Endothelial cell of umbilical vein (primary cell): ENCODE measurements at regions of chr14 and their contacts with region 1.

Region 1: GRCh38 chr14:22386924-22387775 is 201.9 kb downstream of the DAD1 start:
- DNase-seq: peak; percentile 77
- H3K4me3 ChIP-seq: no peak overlapping the region
- H3K27ac ChIP-seq: no peak overlapping the region
- H3K4me1 ChIP-seq: peaks cover 6% of the 10 kb centered on the region
- H3K27me3 ChIP-seq: peaks cover 6 to 15% of the 10 kb centered on the region in 2 experiments
- CTCF ChIP-seq: peak; percentile 68 to 70
- POLR2A ChIP-seq: no peak

Region 2: GRCh38 chr14:22418631-22419030 is 31.5 kb after region 1 on chr14:
- CTCF ChIA-PET with region 1: no interaction called
- POLR2A ChIA-PET with region 1: no interaction called
- dilution Hi-C with region 1: no loop called
- intact Hi-C with region 1: no loop called
- DNase-seq: no peak
- H3K4me3 ChIP-seq: no peak overlapping the region
- H3K27ac ChIP-seq: no peak overlapping the region
- H3K4me1 ChIP-seq: no peaks in the 10 kb centered on the region
- H3K27me3 ChIP-seq: peaks cover 8 to 23% of the 10 kb centered on the region in 2 experiments
- CTCF ChIP-seq: no peak
- POLR2A ChIP-seq: no peak

Region 3: DNA sequence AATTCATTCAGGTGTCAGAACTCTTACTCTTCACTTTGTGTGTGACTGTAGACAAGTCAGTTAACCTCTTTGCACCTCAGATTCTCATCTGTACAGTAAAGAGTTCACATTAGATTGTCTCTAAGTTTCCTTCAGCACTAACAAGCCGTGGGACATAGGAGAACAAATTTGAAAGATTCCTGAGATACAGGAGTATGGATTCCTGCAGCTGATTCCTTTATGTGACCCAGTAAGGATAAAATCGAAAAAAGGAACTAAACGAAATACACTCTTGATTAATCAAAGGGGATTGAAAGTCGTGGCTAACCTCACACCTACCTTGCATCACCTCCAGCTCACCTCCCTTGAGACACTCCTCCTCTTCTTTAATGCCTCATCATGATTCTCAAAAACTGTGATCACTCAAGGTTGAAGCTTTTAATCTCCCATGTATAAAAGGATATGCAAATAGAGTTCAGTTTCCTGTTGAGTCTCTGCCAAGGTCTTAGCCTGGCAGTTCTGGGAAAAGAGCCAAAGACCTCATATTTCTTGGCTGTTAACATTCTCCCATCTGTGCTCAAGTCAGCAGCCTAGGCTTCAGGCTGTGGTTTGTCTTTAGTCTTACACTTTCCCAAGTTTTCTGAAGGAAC is 45.3 kb after region 1 on chr14:
- CTCF ChIA-PET with region 1: interaction called, 5 read pairs
- POLR2A ChIA-PET with region 1: no interaction called
- dilution Hi-C with region 1: no loop called
- intact Hi-C with region 1: loop called (anchors 1 kb)
- DNase-seq: peak; percentile 97
- H3K4me3 ChIP-seq: no peak overlapping the region
- H3K27ac ChIP-seq: no peak overlapping the region
- H3K4me1 ChIP-seq: peaks cover 29% of the 10 kb centered on the region
- H3K27me3 ChIP-seq: peaks cover 4 to 6% of the 10 kb centered on the region in 2 experiments
- CTCF ChIP-seq: no peak
- POLR2A ChIP-seq: no peak

Region 4: DNA sequence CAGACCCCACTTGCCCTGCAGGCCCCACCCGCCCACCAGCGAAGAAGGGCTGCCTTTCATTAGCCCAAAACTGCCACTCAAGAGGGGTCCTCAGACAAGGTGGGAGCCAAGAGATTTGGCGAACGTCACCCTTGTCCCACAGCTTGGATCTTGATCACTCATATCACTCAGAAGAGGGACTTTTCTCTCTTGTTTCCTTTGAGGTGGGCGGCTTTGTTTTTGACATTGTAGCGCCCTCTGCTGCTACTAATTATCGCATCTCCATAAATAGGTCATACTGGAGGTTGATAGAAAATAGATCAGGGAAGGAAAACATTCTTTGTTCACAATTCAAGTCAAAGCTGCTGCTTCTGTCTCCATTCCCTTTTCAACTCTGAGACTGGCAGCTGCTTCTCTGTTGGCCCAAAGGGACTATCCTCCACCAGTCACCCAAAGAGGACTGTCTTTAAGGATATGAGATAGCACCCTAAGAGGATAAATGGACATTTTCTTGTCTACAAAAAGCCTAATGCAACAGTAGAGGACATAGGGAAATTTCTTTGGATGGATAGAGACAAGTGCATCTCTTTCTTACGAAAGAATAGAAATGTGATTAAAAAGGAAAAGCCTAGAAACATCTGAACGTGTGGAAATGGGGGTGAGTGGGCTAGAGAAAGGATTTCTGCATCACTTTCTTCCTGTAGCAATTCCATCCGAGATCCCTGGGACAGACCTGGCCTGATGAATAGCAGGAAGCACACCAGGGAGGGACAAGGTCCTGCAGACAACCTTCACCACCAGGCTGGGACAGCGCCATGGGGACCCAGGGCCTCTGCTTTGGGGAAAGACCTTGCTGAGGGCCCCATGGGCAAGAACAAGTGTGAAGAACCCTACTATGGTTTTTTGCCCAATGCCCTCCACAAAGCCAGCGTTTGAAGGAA is 86.0 kb after region 1 on chr14:
- CTCF ChIA-PET with region 1: interaction called, 82 read pairs
- POLR2A ChIA-PET with region 1: no interaction called
- dilution Hi-C with region 1: no loop called
- intact Hi-C with region 1: loop called (anchors 1 kb)
- DNase-seq: peak; percentile 72
- H3K4me3 ChIP-seq: no peak overlapping the region
- H3K27ac ChIP-seq: no peak overlapping the region
- H3K4me1 ChIP-seq: peaks cover 20% of the 10 kb centered on the region
- H3K27me3 ChIP-seq: peaks cover 0 to 5% of the 10 kb centered on the region in 2 experiments
- CTCF ChIP-seq: peak; percentile 49 to 52
- POLR2A ChIP-seq: no peak

Region 5: GRCh38 chr14:22545842-22546721 is 158.9 kb after region 1 on chr14:
- CTCF ChIA-PET with region 1: interaction called, 5 read pairs
- POLR2A ChIA-PET with region 1: no interaction called
- dilution Hi-C with region 1: no loop called
- intact Hi-C with region 1: loop called (anchors 2 kb)
- DNase-seq: peak; percentile 93
- H3K4me3 ChIP-seq: no peak overlapping the region
- H3K27ac ChIP-seq: peak overlapping the region; percentile 86
- H3K4me1 ChIP-seq: peaks cover 48% of the 10 kb centered on the region
- H3K27me3 ChIP-seq: no peaks in the 10 kb centered on the region
- CTCF ChIP-seq: no peak
- POLR2A ChIP-seq: no peak

Region 6: GRCh38 chr14:22900081-22900799 is 513.1 kb after region 1 on chr14:
- CTCF ChIA-PET with region 1: interaction called, 6 read pairs
- POLR2A ChIA-PET with region 1: no interaction called
- dilution Hi-C with region 1: no loop called
- intact Hi-C with region 1: loop called (anchors 1 kb)
- DNase-seq: peak; percentile 70
- H3K4me3 ChIP-seq: no peak overlapping the region
- H3K27ac ChIP-seq: no peak overlapping the region
- H3K4me1 ChIP-seq: no peaks in the 10 kb centered on the region
- H3K27me3 ChIP-seq: no peaks in the 10 kb centered on the region
- CTCF ChIP-seq: peak; percentile 38 to 65
- POLR2A ChIP-seq: no peak